Activated naive CD4-positive, alpha-beta T cell treated with anti-CD3 and anti-CD28 coated beads, Interleukin-2, amount 10 ng/mL, durations not matched to agents 7 days and 5 days (primary cell): ENCODE measurements at regions of chr2 and their contacts with region 1.

Region 1: GRCh38 chr2:216034065-216034464 is 20.7 kb upstream of the MREG start:
- DNase-seq: peak; percentile 88
- H3K4me3 Mint-ChIP-seq: no peak overlapping the region
- H3K27ac Mint-ChIP-seq: no peak overlapping the region
- H3K4me1 Mint-ChIP-seq: peaks cover 26% of the 10 kb centered on the region
- H3K27me3 Mint-ChIP-seq: no peaks in the 10 kb centered on the region

Region 2: GRCh38 chr2:216015722-216016464 is 18.2 kb before region 1 on chr2:
- CTCF ChIA-PET with region 1: interaction called, 11 read pairs
- DNase-seq: peak; percentile 81
- H3K4me3 Mint-ChIP-seq: peak overlapping the region; percentile 48
- H3K27ac Mint-ChIP-seq: peak overlapping the region; percentile 93
- H3K4me1 Mint-ChIP-seq: peaks cover 70% of the 10 kb centered on the region
- H3K27me3 Mint-ChIP-seq: peaks cover 6% of the 10 kb centered on the region

Region 3: GRCh38 chr2:216023055-216023648 is 10.9 kb before region 1 on chr2:
- CTCF ChIA-PET with region 1: interaction called, 24 read pairs
- DNase-seq: peak; percentile 66
- H3K4me3 Mint-ChIP-seq: no peak overlapping the region
- H3K27ac Mint-ChIP-seq: no peak overlapping the region
- H3K4me1 Mint-ChIP-seq: peaks cover 10% of the 10 kb centered on the region
- H3K27me3 Mint-ChIP-seq: no peaks in the 10 kb centered on the region

Region 4: GRCh38 chr2:216044883-216045486 is 10.9 kb after region 1 on chr2:
- CTCF ChIA-PET with region 1: interaction called, 25 read pairs
- DNase-seq: no peak
- H3K4me3 Mint-ChIP-seq: no peak overlapping the region
- H3K27ac Mint-ChIP-seq: no peak overlapping the region
- H3K4me1 Mint-ChIP-seq: no peaks in the 10 kb centered on the region
- H3K27me3 Mint-ChIP-seq: no peaks in the 10 kb centered on the region

Region 5: DNA sequence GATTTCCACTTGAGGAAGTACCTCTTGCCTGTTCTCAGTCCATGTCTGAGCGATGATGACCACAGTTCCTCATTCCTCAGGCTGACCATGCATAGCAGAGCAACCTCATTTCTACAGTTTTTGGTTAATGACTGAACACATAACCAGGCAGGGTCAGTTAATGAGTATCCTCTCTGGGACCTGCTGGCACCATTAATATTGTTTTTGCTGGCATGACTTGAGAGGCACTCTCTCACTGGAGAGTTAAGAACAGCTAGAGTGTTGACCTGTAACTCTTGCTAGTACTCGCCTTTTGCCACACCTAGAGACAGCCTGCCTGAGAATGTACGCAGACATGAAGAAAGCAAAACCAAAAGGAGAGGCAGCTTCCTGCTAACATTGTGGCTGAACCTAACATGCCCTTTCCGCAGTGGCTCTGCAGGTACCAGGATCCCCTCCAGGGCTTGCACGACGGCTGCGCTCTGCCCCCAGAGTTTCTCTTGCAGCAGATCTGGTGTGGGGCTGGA is 23.7 kb after region 1 on chr2:
- CTCF ChIA-PET with region 1: interaction called, 25 read pairs
- DNase-seq: peak; percentile 78
- H3K4me3 Mint-ChIP-seq: peak overlapping the region; percentile 68
- H3K27ac Mint-ChIP-seq: peak overlapping the region; percentile 97
- H3K4me1 Mint-ChIP-seq: peaks cover 37% of the 10 kb centered on the region
- H3K27me3 Mint-ChIP-seq: no peaks in the 10 kb centered on the region

Region 6: DNA sequence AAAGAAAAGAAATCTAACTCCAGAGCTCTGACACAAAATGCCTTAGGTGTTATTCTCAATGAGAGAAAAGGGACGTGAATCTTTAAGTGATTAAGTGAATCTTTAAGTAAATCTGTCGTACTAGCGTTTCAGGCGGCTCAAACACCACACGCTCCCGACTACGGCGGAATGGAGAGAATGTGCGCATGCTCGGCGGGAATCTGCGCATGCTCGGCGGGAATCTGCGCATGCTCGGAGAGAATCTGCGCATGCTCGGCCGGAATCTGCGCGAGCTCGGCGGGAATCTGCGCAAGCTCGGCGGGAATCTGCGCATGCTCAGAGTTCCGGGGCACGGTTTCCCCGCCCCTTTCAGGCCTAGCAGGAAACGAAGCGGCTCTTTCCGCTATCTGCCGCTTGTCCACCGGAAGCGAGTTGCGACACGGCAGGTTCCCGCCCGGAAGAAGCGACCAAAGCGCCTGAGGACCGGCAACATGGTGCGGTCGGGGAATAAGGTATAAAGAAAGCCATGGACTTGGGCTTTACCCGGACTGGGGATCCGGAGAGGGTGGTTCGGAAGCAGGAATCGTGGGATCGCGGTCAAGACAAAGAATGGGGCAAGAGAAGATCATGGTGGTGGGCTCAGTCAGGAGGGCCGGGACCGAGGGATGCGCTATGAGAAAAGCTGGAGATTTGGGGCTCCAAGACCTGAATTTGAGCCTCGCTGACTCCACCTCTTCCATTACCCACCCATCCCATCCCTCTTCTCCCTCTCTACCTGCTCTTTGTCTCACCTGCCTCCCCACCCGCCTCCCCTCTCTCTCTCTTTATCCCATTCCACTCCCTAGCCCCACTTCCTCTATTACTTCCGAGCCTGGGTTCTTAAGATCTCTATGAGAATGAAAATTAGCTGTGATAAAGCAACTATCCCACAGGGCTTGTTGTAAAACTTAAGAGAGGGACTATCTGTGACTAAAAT is 75.2 kb after region 1 on chr2 and contains the start of gene XRCC5:
- CTCF ChIA-PET with region 1: interaction called, 15 read pairs
- DNase-seq: peak; percentile 97
- H3K4me3 Mint-ChIP-seq: peak within 1 kb of the TSS; percentile 99
- H3K27ac Mint-ChIP-seq: peak within 1 kb of the TSS; percentile 97
- H3K4me1 Mint-ChIP-seq: peaks cover 56% of the 10 kb centered on the region
- H3K27me3 Mint-ChIP-seq: peaks cover 4% of the 10 kb centered on the region